ENCODE measurements at regions of chr7 and their contacts with region 1.

Region 1: DNA sequence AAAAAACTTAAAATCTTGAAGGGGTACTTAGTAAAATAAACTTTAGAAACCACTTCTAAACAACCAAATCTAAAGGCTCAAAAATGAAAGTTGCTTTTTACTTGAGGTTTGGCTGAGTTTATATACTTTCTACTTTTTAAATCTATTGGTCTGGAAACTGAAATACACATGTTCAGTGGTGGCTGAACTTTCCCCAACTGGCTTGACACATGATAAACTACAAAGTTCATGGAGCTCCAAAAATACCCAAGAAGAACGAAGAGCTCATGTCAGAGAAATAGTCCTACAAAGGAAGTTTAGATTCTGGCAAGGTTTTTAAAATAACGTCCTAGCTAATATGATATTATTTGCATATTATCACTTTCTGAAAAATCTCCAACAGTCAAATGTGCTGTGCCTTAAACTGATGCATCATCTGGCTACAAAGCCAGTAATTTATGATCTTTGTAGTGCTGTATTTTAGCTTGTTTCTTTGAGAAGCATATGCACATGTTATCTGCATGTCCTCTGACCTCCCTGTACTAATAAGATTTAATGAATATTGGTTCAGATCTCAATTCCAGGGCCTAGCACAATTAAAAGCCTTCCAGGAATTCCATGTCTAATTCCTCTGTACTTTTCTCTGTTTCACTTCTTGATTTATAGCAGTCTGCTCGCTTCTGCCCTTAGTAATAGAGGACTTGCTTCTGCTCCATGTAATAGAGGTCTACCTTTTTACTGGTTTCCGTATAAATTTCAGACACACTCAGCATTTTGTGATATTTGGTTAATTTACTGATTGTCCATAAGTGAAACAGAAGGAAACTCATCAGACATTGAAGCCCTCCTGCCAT is 28.2 kb downstream of the SEMA3C start:
- DNase-seq: peak; percentile 34
- ATAC-seq: no peak; the same call in 1 of the 2 replicates
- H3K4me3 ChIP-seq: no peak overlapping the region
- H3K27ac ChIP-seq: no peak overlapping the region
- H3K4me1 ChIP-seq: peaks cover 7% of the 10 kb centered on the region; the same call in 1 of the 2 replicates
- H3K27me3 ChIP-seq: no peaks in the 10 kb centered on the region
- CTCF ChIP-seq: no peak
- POLR2A ChIP-seq: no peak
- RAD21 ChIP-seq: no peak

Region 2: GRCh38 chr7:80841423-80842218 is 49.0 kb before region 1 on chr7:
- CTCF ChIA-PET with region 1: no interaction called
- POLR2A ChIA-PET with region 1: no interaction called
- dilution Hi-C with region 1: no loop called
- in situ Hi-C with region 1: no loop called
- intact Hi-C with region 1: loop called (anchors 5 kb)
- DNase-seq: no peak
- ATAC-seq: peak; percentile 42
- H3K4me3 ChIP-seq: no peak overlapping the region
- H3K27ac ChIP-seq: no peak overlapping the region
- H3K4me1 ChIP-seq: peaks cover 8% of the 10 kb centered on the region; the same call in 1 of the 2 replicates
- H3K27me3 ChIP-seq: no peaks in the 10 kb centered on the region
- CTCF ChIP-seq: no peak
- POLR2A ChIP-seq: no peak
- RAD21 ChIP-seq: no peak

Measured in IMR-90 (cell line).